Caco-2 (cell line): ENCODE measurements at regions of chr19 and their contacts with region 1.

Region 1: DNA sequence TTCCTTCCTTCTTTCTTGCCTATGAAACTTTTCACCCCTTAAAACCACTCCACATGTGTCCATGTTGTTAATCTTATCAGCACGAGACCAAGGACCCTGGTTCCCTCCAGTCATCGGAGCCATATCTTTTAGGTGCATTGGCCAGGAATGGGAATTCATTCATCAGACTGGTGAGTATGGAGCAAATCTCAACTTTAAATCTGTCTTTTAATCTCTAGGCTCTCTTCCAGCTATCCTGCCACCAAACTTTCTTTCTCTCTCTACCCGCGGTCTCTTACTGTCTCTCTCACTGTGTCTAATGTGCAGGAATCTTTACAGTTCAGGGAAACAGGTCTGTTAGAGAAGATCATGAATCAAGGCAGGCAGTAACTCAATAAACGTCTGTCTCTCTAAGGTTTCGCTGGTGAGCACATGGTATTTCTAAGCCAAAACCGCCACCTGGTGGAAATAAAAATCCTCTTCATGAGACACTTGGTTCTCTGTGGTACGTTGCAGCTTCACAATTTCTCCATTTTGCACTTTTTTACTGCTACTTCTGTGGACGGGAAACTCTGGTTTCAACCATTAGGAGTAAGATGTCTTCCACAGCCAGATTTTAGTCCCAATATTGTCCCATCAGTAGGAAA is 16.1 kb downstream of the LGALS16 start:
- DNase-seq: peak; percentile 48 to 66
- H3K4me3 ChIP-seq: no peak overlapping the region
- H3K4me3 Mint-ChIP-seq: no peak overlapping the region
- H3K27ac Mint-ChIP-seq: no peak overlapping the region
- H3K4me1 ChIP-seq: no peaks in the 10 kb centered on the region
- H3K4me1 Mint-ChIP-seq: peaks cover 7% of the 10 kb centered on the region
- H3K27me3 ChIP-seq: no peaks in the 10 kb centered on the region; the same call in 1 of the 2 replicates
- H3K27me3 Mint-ChIP-seq: peaks cover 9% of the 10 kb centered on the region
- CTCF ChIP-seq: peak; percentile 54 to 69

Region 2: GRCh38 chr19:39661565-39661964 is 10.3 kb before region 1 on chr19:
- CTCF ChIA-PET with region 1: no interaction called
- POLR2A ChIA-PET with region 1: no interaction called
- intact Hi-C with region 1: no loop called
- DNase-seq: no peak
- H3K4me3 ChIP-seq: no peak overlapping the region
- H3K4me3 Mint-ChIP-seq: no peak overlapping the region
- H3K27ac Mint-ChIP-seq: no peak overlapping the region
- H3K4me1 ChIP-seq: peaks cover 24% of the 10 kb centered on the region
- H3K4me1 Mint-ChIP-seq: peaks cover 5% of the 10 kb centered on the region
- H3K27me3 ChIP-seq: no peaks in the 10 kb centered on the region
- H3K27me3 Mint-ChIP-seq: no peaks in the 10 kb centered on the region
- CTCF ChIP-seq: no peak

Region 3: GRCh38 chr19:39765091-39766076 is 93.5 kb after region 1 on chr19:
- CTCF ChIA-PET with region 1: interaction called, 5 read pairs
- POLR2A ChIA-PET with region 1: no interaction called
- intact Hi-C with region 1: loop called (anchors 10 kb)
- DNase-seq: peak; percentile 44 to 59
- H3K4me3 ChIP-seq: no peak overlapping the region
- H3K4me3 Mint-ChIP-seq: no peak overlapping the region
- H3K27ac Mint-ChIP-seq: no peak overlapping the region
- H3K4me1 ChIP-seq: no peaks in the 10 kb centered on the region
- H3K4me1 Mint-ChIP-seq: no peaks in the 10 kb centered on the region
- H3K27me3 ChIP-seq: no peaks in the 10 kb centered on the region
- H3K27me3 Mint-ChIP-seq: peaks cover 14% of the 10 kb centered on the region
- CTCF ChIP-seq: peak; percentile 86